Activated CD8-positive, alpha-beta T cell treated with anti-CD3 and anti-CD28 coated beads, Interleukin-2, amount 10 ng/mL, durations not matched to agents 7 days and 5 days (primary cell): ENCODE measurements at regions of chr20 and their contacts with region 1.

Region 1: DNA sequence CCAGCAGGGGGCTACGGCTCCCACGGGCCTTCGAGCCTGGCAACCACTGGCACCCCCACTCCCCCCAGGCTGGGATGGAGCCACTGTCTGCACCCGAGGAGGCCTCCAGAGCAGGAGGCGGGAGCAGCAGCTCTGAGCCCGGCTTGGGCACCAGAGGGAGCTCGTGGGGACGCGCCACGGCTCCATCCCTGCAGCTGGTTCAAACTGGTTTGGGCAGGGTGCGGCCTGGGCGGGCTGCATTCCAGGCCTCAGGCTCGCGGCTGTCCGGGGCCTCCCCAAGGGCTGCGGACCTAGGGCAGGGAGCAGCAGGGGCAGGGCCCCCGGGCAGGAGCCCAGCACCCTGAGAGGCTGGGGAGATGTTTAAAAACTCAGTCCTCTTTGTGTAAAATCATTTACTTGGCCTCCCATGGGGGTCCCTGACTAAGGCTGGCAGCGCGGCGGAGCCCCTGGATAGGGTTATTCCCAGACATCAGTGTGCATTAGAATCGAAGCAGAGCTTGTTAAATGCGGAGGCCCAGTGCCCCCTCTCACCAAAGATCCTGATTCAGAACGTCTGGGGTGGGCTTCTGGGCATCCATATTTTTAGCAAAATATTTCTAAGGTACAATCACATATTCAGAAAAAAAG is 4.1 kb upstream of the BCAS4 start:
- DNase-seq: peak; percentile 88
- ATAC-seq: peak; percentile 70
- H3K4me3 Mint-ChIP-seq: no peak overlapping the region
- H3K27ac Mint-ChIP-seq: peak overlapping the region; percentile 77
- H3K4me1 Mint-ChIP-seq: peaks cover 26% of the 10 kb centered on the region
- H3K27me3 Mint-ChIP-seq: no peaks in the 10 kb centered on the region

Region 2: DNA sequence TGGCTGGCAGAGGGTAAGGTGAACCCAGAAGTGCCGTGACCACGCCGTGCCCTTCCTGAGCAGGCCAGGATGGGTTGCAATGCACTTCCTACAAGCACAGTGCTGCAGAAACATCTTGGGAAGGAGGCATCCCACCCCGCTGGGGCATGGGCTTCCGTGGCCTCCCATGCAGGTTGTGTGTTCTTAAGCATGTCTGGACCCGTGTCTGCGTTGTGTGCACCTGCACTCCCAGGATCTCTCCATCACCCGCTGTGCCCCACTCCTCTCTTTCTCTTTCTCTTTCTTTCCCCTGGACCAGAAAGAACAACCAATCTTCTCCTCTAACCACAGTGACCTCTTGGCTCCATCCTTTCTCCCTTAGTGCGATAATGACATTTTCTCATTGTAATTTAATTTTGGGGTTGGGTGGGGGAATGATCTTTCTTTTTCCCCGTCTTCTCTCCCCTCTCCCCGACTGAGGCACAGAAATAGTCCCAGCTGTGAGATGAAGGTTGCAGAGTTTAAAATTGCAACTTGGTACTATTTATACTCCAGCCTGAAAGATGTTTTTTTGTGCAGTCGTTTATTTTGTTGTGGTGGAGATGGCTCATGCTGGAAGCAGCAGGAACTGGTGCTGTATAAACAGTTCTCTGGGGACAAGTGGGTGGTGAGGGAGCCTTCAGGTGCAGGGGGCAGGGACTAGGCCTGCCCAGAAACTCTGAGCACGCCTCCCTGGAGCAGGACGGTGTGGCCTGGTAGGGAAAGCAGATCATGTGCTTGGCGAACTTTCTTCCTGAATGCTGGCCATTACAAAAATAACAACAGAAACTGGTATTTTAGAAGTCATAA is 24.6 kb after region 1 on chr20:
- CTCF ChIA-PET with region 1: interaction called, 63 read pairs
- POLR2A ChIA-PET with region 1: interaction called, 19 read pairs
- DNase-seq: no peak
- ATAC-seq: peak; percentile 29
- H3K4me3 Mint-ChIP-seq: peak overlapping the region; percentile 58
- H3K27ac Mint-ChIP-seq: peak overlapping the region; percentile 91
- H3K4me1 Mint-ChIP-seq: peaks cover 69% of the 10 kb centered on the region
- H3K27me3 Mint-ChIP-seq: no peaks in the 10 kb centered on the region

Region 3: GRCh38 chr20:50844430-50845100 is 53.8 kb after region 1 on chr20:
- CTCF ChIA-PET with region 1: interaction called, 30 read pairs
- POLR2A ChIA-PET with region 1: interaction called, 3 read pairs
- DNase-seq: peak; percentile 85
- ATAC-seq: peak; percentile 98
- H3K4me3 Mint-ChIP-seq: peak overlapping the region; percentile 25
- H3K27ac Mint-ChIP-seq: peak overlapping the region; percentile 89
- H3K4me1 Mint-ChIP-seq: peaks cover 42% of the 10 kb centered on the region
- H3K27me3 Mint-ChIP-seq: no peaks in the 10 kb centered on the region

Region 4: GRCh38 chr20:50904067-50904570 is 113.4 kb after region 1 on chr20:
- CTCF ChIA-PET with region 1: interaction called, 40 read pairs
- POLR2A ChIA-PET with region 1: no interaction called
- DNase-seq: no peak
- ATAC-seq: no peak
- H3K4me3 Mint-ChIP-seq: no peak overlapping the region
- H3K27ac Mint-ChIP-seq: no peak overlapping the region
- H3K4me1 Mint-ChIP-seq: peaks cover 5% of the 10 kb centered on the region
- H3K27me3 Mint-ChIP-seq: no peaks in the 10 kb centered on the region

Region 5: DNA sequence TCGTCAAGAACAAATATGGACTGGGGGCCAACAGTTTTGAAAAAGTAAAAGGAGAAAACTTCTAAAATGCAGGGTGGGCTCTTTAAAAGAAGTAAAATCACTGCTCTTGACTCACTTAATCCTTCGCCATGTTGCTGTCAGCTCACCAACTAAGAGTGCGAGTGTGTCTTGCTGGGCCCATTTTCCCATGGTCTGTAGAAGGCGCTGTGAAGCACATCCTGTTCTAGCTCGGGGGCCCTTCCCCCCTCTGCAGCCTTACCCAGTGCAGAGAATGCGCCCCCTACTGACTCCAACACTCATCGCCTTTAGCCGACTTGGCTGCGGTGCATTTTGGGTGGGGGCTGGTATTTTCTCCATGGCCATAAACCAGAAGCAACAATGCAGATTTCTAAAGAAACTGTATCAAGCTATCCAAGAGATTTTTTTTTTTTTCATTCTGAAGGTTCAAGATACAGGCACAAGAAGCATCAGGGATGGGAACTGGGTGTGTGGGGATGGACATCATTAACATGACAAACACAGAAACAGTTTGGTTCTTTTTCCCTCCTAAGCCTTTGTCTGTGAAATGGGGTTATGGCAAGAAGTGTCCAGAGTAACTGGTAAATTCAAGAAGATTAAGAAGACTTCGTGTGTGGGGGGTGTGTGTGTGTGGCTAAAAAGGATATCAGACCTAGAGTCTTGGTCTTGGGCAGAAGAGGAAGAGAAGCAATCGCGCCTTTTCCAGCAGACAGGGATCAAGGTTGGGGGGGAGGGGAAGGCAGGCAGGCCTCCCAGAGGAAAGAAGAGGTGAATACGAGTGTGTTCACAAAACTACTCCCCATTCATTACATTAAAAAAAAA is 138.8 kb after region 1 on chr20:
- CTCF ChIA-PET with region 1: interaction called, 407 read pairs
- POLR2A ChIA-PET with region 1: interaction called, 54 read pairs
- DNase-seq: peak; percentile 98
- ATAC-seq: peak; percentile 70
- H3K4me3 Mint-ChIP-seq: peak overlapping the region; percentile 90
- H3K27ac Mint-ChIP-seq: peak overlapping the region; percentile 95
- H3K4me1 Mint-ChIP-seq: peaks cover 53% of the 10 kb centered on the region
- H3K27me3 Mint-ChIP-seq: no peaks in the 10 kb centered on the region

Region 6: GRCh38 chr20:50980851-50981713 is 190.3 kb after region 1 on chr20:
- CTCF ChIA-PET with region 1: interaction called, 29 read pairs
- POLR2A ChIA-PET with region 1: no interaction called
- DNase-seq: peak; percentile 80
- ATAC-seq: peak; percentile 71
- H3K4me3 Mint-ChIP-seq: no peak overlapping the region
- H3K27ac Mint-ChIP-seq: no peak overlapping the region
- H3K4me1 Mint-ChIP-seq: peaks cover 4% of the 10 kb centered on the region
- H3K27me3 Mint-ChIP-seq: peaks cover 13% of the 10 kb centered on the region